B cell (primary cell): ENCODE measurements at regions of chr3 and their contacts with region 1.

Region 1: DNA sequence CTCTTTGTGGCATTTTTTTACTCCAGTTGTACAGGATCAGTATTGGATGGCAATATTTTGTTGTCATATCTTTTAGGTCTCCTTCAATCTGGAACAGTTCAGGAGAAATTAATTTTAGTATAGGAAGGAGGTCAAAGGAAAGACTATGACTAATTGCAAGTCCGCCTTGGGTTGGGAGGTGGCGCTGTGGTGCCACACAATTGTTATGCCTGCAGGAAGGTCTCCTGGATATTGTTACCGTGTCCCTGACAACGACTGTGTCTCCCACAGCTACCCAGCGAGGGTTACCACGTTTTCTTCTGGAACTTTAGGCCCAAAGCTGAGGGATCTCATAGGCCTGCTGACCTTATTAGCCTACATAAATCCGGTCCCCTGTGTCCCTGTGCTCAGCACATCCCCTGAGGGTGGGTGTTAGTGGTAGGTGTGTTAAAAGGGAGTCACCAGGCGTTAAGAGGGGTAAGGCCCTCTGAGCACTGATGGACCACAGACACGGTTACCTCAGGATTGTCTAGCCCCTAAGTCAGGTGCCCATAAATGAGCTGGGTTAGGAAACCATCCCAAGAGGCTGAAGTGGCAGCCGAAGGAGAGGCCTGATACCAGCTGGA is 31.5 kb downstream of the KCNAB1 start:
- DNase-seq: peak; percentile 47
- ATAC-seq: peak; percentile 28
- H3K4me3 ChIP-seq: no peak overlapping the region
- H3K4me3 Mint-ChIP-seq: no peak overlapping the region
- H3K27ac ChIP-seq: no peak overlapping the region
- H3K27ac Mint-ChIP-seq: no peak overlapping the region
- H3K4me1 ChIP-seq: no peaks in the 10 kb centered on the region
- H3K4me1 Mint-ChIP-seq: peaks cover 7% of the 10 kb centered on the region
- H3K27me3 ChIP-seq: peaks cover 0 to 1% (median 0%) of the 10 kb centered on the region in 4 experiments
- H3K27me3 Mint-ChIP-seq: peaks cover 15% of the 10 kb centered on the region
- CTCF ChIP-seq: peak; percentile 76

Region 2: DNA sequence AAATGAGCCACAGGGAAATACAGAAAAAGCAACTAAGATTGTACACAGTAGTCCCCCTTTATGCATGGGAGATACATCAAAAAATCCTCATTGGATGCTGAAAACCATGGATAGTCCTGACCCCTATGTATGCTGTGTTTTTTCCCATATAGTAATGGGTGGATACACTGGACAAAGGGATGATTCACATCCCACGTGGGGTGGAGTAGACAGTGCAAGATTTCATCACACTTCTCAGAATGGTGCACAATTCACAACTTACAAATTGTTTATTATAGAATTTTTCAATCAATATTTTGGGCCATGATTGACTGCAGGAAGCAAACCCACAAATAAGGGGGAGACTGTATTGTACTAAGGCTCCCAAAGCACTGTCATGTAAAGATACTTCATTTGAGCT is 634.0 kb before region 1 on chr3:
- CTCF ChIA-PET with region 1: no interaction called
- POLR2A ChIA-PET with region 1: no interaction called
- intact Hi-C with region 1: no loop called
- DNase-seq: no peak
- ATAC-seq: no peak
- H3K4me3 ChIP-seq: no peak overlapping the region
- H3K4me3 Mint-ChIP-seq: no peak overlapping the region
- H3K27ac ChIP-seq: no peak overlapping the region
- H3K27ac Mint-ChIP-seq: no peak overlapping the region
- H3K4me1 ChIP-seq: peaks cover 0 to 9% of the 10 kb centered on the region in 2 donors
- H3K4me1 Mint-ChIP-seq: peaks cover 12% of the 10 kb centered on the region
- H3K27me3 ChIP-seq: no peaks in the 10 kb centered on the region
- H3K27me3 Mint-ChIP-seq: no peaks in the 10 kb centered on the region
- CTCF ChIP-seq: no peak

Region 3: DNA sequence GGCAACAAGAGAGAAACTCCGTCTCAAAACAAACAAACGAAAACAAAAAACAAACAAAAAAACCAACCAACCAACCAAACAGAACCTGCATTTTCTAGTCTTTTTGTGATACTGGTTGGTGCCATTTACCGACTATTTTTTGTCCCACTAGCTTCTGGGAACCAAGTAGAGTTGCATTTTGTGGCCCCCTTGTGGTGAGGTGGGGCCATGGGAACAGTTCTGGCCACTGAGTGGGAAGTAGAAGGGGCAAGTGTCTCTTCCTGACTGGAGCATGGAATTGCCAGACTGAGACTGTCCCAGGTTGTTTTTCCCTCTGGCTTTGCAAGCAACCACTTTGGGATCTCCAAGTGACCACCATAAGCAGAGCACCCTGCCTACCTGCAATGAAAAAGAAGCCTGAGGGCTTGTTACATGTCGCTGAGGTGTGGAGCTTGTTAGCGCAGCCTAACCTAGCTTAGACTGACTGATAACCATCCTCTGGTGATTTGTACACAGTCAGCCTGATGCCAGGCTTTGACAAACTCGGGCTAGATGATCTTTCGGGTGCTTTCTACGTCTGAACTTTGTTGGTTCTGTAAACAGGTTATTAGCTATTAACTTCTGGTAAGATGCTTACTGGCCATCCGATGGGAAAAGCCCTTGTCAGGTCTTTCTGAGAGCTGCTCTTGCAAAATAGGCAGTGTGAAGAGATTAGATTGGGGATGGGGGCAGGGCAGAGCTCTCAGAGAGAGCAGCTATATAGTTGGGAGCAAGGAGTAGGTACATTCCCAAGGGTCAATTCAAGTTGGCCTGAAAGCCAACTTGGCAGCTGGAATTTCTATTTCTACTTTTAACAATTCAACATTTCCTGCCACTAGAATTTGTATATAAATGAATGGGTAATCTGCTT is 230.8 kb after region 1 on chr3:
- CTCF ChIA-PET with region 1: interaction called, 22 read pairs
- POLR2A ChIA-PET with region 1: no interaction called
- intact Hi-C with region 1: loop called (anchors 10 kb)
- DNase-seq: peak; percentile 14
- ATAC-seq: no peak
- H3K4me3 ChIP-seq: no peak overlapping the region
- H3K4me3 Mint-ChIP-seq: no peak overlapping the region
- H3K27ac ChIP-seq: no peak overlapping the region
- H3K27ac Mint-ChIP-seq: no peak overlapping the region
- H3K4me1 ChIP-seq: no peaks in the 10 kb centered on the region
- H3K4me1 Mint-ChIP-seq: no peaks in the 10 kb centered on the region
- H3K27me3 ChIP-seq: no peaks in the 10 kb centered on the region
- H3K27me3 Mint-ChIP-seq: peaks cover 17% of the 10 kb centered on the region
- CTCF ChIP-seq: peak; percentile 39

Region 4: GRCh38 chr3:156536524-156537231 is 384.8 kb after region 1 on chr3:
- CTCF ChIA-PET with region 1: interaction called, 58 read pairs
- POLR2A ChIA-PET with region 1: no interaction called
- intact Hi-C with region 1: loop called (anchors 1 kb)
- DNase-seq: no peak
- ATAC-seq: no peak
- H3K4me3 ChIP-seq: no peak overlapping the region
- H3K4me3 Mint-ChIP-seq: no peak overlapping the region
- H3K27ac ChIP-seq: no peak overlapping the region
- H3K27ac Mint-ChIP-seq: no peak overlapping the region
- H3K4me1 ChIP-seq: no peaks in the 10 kb centered on the region
- H3K4me1 Mint-ChIP-seq: no peaks in the 10 kb centered on the region
- H3K27me3 ChIP-seq: no peaks in the 10 kb centered on the region
- H3K27me3 Mint-ChIP-seq: no peaks in the 10 kb centered on the region
- CTCF ChIP-seq: no peak

Region 5: GRCh38 chr3:156542715-156543555 is 391.0 kb after region 1 on chr3:
- CTCF ChIA-PET with region 1: interaction called, 58 read pairs
- POLR2A ChIA-PET with region 1: no interaction called
- intact Hi-C with region 1: loop called (anchors 1 kb)
- DNase-seq: no peak
- ATAC-seq: no peak
- H3K4me3 ChIP-seq: no peak overlapping the region
- H3K4me3 Mint-ChIP-seq: no peak overlapping the region
- H3K27ac ChIP-seq: no peak overlapping the region
- H3K27ac Mint-ChIP-seq: no peak overlapping the region
- H3K4me1 ChIP-seq: no peaks in the 10 kb centered on the region
- H3K4me1 Mint-ChIP-seq: no peaks in the 10 kb centered on the region
- H3K27me3 ChIP-seq: no peaks in the 10 kb centered on the region
- H3K27me3 Mint-ChIP-seq: no peaks in the 10 kb centered on the region
- CTCF ChIP-seq: no peak

Region 6: GRCh38 chr3:157081681-157082210 is 929.8 kb after region 1 on chr3:
- CTCF ChIA-PET with region 1: interaction called, 14 read pairs
- POLR2A ChIA-PET with region 1: no interaction called
- intact Hi-C with region 1: no loop called
- DNase-seq: peak; percentile 86
- ATAC-seq: peak; percentile 99
- H3K4me3 ChIP-seq: no peak overlapping the region
- H3K4me3 Mint-ChIP-seq: peak overlapping the region; percentile 2
- H3K27ac ChIP-seq: no peak overlapping the region
- H3K27ac Mint-ChIP-seq: peak overlapping the region; percentile 63
- H3K4me1 ChIP-seq: peaks cover 9 to 11% of the 10 kb centered on the region in 2 donors
- H3K4me1 Mint-ChIP-seq: peaks cover 11% of the 10 kb centered on the region
- H3K27me3 ChIP-seq: peaks cover 0 to 4% (median 0%) of the 10 kb centered on the region in 4 experiments
- H3K27me3 Mint-ChIP-seq: peaks cover 8% of the 10 kb centered on the region
- CTCF ChIP-seq: peak; percentile 96

Region 7: DNA sequence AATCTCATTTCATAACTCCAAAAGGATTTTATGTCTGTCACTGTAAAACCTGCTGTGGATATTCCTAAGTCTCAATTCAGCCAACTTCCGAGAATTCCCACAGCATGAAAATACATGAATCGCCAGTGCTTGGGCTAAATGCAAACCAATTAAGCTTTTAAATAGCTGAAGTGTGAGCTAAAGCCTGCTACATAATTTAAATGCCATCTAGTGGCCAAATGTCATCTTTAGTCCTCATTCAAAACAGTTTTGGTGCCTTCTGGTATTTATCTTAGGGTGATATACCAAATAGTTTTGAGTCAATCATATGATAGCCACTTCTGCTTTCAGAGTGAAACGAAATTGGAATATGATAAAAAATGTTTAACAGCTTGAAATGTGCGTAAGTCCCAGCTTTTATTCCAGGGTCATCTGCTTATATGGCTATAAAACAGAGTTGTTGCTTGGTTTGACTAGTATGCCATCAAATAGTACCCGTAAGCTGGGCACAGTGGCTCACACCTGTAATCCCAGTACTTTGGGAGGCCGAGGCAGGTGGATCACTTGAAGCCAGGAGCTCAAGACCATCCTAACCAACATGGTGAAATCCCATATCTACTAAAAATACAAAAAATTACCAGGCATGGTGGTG is 1049.8 kb after region 1 on chr3:
- CTCF ChIA-PET with region 1: interaction called, 4 read pairs
- POLR2A ChIA-PET with region 1: no interaction called
- intact Hi-C with region 1: loop called (anchors 1 kb)
- DNase-seq: peak; percentile 48
- ATAC-seq: peak; percentile 10
- H3K4me3 ChIP-seq: no peak overlapping the region
- H3K4me3 Mint-ChIP-seq: no peak overlapping the region
- H3K27ac ChIP-seq: no peak overlapping the region
- H3K27ac Mint-ChIP-seq: no peak overlapping the region
- H3K4me1 ChIP-seq: no peaks in the 10 kb centered on the region
- H3K4me1 Mint-ChIP-seq: peaks cover 5% of the 10 kb centered on the region
- H3K27me3 ChIP-seq: no peaks in the 10 kb centered on the region
- H3K27me3 Mint-ChIP-seq: no peaks in the 10 kb centered on the region
- CTCF ChIP-seq: peak; percentile 63

Region 8: GRCh38 chr3:157493627-157494550 is 1342.0 kb after region 1 on chr3:
- CTCF ChIA-PET with region 1: no interaction called
- POLR2A ChIA-PET with region 1: no interaction called
- intact Hi-C with region 1: loop called (anchors 5 kb)
- DNase-seq: peak; percentile 13
- ATAC-seq: no peak
- H3K4me3 ChIP-seq: no peak overlapping the region
- H3K4me3 Mint-ChIP-seq: no peak overlapping the region
- H3K27ac ChIP-seq: no peak overlapping the region
- H3K27ac Mint-ChIP-seq: no peak overlapping the region
- H3K4me1 ChIP-seq: no peaks in the 10 kb centered on the region
- H3K4me1 Mint-ChIP-seq: peaks cover 1% of the 10 kb centered on the region
- H3K27me3 ChIP-seq: no peaks in the 10 kb centered on the region
- H3K27me3 Mint-ChIP-seq: peaks cover 30% of the 10 kb centered on the region
- CTCF ChIP-seq: peak; percentile 51